Head of caudate nucleus (tissue), 42 donors: ENCODE measurements at regions of chr11 and their contacts with region 1.

Region 1: GRCh38 chr11:29826878-29827277 is 190.0 kb downstream of the KCNA4 start:
- DNase-seq: no peak

Region 2: DNA sequence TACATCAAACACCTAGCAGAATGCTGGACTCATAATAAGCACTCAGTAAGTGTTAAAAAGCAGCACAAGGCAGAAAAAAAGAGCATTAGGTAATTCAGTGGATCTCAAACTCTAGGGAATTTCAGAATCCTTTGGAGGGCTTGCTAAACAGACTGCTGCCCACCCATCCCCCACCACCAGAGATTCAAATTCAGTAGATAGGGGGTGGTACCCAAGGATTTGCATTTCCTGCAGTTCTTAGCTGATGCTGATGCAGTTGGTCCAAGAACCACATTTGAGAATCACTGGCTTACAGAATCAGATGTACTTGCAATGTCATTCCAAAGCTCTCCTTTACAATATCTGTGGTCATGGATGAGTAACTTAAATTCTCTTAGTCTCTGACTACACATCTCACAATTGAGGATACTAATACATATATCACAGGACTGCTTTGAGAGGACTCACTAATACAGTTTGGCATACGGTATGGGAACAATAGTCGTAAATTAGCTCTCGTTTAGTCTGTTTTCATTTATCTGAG is 474.5 kb before region 1 on chr11:
- intact Hi-C with region 1: loop called (anchors 10 kb)
- DNase-seq: no peak

Region 3: GRCh38 chr11:29773656-29774264 is 53.1 kb before region 1 on chr11:
- intact Hi-C with region 1: no loop called
- DNase-seq: peak; percentile 28 to 91 (median 62)

Region 4: DNA sequence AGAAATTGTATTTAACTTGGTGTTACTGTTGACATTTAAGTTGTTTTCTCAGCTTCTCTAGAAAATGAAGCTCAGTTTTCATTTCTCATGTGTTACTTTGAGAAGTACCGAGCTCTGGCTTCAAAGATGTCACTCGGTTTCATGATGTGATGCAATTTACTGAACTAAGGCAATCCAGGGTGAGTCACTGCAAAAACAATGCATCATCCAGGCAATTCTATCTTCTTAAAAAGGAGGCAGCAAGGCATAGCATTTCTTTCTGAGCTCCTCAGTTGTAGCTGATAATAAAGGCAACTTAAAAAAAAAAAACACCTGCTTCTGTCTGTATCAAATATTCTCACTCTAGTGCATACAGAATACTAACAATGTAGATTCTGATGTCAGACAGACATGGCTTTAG is 281.0 kb after region 1 on chr11:
- intact Hi-C with region 1: no loop called
- DNase-seq: peak in 21 of 42 donors; percentile 6 to 72 (median 35)